Dorsolateral prefrontal cortex (tissue), 120 donors: ENCODE measurements at regions of chr11 and their contacts with region 1.

Region 1: DNA sequence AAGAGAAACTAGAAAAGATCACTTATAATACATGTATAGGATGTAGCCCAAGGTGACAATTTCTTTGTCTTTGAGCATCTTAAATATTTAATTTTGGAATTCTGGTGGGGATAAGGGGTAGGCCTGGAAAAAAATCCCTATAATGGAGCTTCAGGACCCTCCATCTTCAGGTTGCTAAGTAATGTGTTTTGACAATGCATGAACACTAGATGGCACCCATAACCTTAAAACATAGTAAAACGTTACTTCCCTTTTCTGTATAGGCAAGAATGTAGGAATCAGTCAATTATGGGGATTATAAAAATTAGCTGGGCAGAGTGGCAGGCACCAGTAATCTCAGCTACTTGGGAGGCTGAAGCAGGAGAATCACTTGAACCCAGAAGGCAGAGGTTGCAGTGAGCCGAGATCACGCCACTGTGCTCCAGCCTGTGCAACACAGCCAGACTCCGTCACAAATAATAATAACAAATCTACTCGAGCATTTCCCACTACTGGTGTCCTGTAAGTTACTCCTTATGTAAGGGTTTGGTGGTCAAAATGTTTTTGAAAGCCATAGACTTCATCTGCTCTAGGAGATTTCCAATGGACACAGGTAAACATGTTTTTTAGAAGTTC is 541.9 kb upstream of the CCDC90B start:
- DNase-seq: no peak
- H3K4me3 ChIP-seq: peak overlapping the region in 45 of 59 donors; percentile 10 to 57 (median 34)
- H3K27ac ChIP-seq: peak overlapping the region in 56 of 59 donors; percentile 8 to 85 (median 67)
- H3K27me3 ChIP-seq: no peaks in the 10 kb centered on the region
- CTCF ChIP-seq: peak; percentile 38 to 83 (median 70)

Region 2: GRCh38 chr11:84390441-84391078 is 562.5 kb after region 1 on chr11:
- intact Hi-C with region 1: loop called (anchors 5 to 10 kb)
- DNase-seq: no peak
- H3K4me3 ChIP-seq: no peak overlapping the region
- H3K27ac ChIP-seq: peak overlapping the region in 1 of 59 donors; percentile 5
- H3K27me3 ChIP-seq: no peaks in the 10 kb centered on the region
- CTCF ChIP-seq: no peak